Gastrocnemius medialis (tissue), 4 donors: ENCODE measurements at regions of chr20 and their contacts with region 1.

Region 1: DNA sequence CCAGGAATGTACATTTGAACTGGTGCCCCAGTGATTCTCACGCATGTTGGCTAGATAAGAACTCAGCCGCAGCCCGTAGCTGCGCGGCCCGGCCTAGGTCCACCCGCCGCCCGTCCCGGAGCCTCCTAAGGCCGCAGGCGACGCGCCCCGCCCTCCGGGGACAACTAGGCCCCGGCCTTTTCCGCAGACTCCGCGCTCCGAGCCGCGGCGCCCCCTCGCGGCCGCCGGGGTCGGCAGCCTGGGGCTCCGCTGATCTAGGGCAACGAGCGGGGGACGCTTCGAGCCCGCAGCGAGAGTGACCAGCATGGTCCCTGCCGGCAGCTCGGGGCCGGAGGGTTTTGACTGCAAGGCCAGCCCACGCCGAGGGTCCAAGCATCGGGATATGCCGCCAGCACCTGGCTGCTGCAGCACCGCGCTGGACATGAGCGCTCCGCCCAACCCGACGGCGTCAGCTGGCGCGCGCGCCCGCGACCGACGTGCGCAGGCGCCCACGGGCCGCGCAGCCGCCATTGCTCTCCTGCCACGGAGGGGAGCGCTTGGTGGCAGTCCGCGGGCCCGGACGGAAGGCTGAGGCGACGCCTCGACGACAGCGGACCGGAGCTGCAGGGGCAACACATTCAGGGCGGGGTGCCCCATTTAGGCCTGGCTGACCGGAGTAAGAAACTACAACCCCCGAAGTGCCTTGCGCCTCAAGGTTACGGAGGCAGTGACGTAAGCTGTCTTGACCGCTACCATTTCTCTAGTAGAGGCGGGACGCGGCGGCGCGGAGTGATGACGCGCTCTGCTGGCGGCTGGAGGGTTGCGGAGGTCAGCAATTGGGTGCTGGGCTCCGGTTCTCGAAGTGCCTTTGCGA is at the start of gene AP5S1:
- DNase-seq: peak; percentile 96 to 98
- ATAC-seq: peak; percentile 87 to 92
- H3K4me3 ChIP-seq: peak within 1 kb of the TSS; percentile 64 to 75 (median 66)
- H3K27ac ChIP-seq: peak within 1 kb of the TSS; percentile 89 to 98 (median 96)
- H3K4me1 ChIP-seq: peaks cover 19 to 23% of the 10 kb centered on the region in 2 donors
- H3K27me3 ChIP-seq: no peaks in the 10 kb centered on the region
- CTCF ChIP-seq: peak; percentile 92 to 100 (median 100)
- POLR2A ChIP-seq: peak; percentile 43 to 60
- total RNA-seq, gene AP5S1: 11.6 to 20.9 (median 17.3) TPM

Region 2: GRCh38 chr20:3679749-3680700 is 140.2 kb before region 1 on chr20:
- in situ Hi-C with region 1: no loop called
- intact Hi-C with region 1: loop called (anchors 1 kb)
- DNase-seq: no peak
- ATAC-seq: no peak
- H3K4me3 ChIP-seq: peak overlapping the region in 1 of 4 donors; percentile 57
- H3K27ac ChIP-seq: peak overlapping the region; percentile 63 to 70 (median 66)
- H3K4me1 ChIP-seq: peaks cover 0 to 13% of the 10 kb centered on the region in 2 donors
- H3K27me3 ChIP-seq: peaks cover 5 to 23% (median 9%) of the 10 kb centered on the region in 3 donors
- CTCF ChIP-seq: no peak
- POLR2A ChIP-seq: no peak

Region 3: GRCh38 chr20:3686867-3687321 is 133.4 kb before region 1 on chr20:
- in situ Hi-C with region 1: no loop called
- intact Hi-C with region 1: loop called (anchors 1 kb)
- DNase-seq: peak; percentile 80 to 90
- ATAC-seq: peak; percentile 99
- H3K4me3 ChIP-seq: peak overlapping the region in 1 of 4 donors; percentile 5
- H3K27ac ChIP-seq: peak overlapping the region; percentile 57 to 76 (median 72)
- H3K4me1 ChIP-seq: peaks cover 14 to 16% of the 10 kb centered on the region in 2 donors
- H3K27me3 ChIP-seq: peaks cover 3 to 10% (median 5%) of the 10 kb centered on the region in 3 donors
- CTCF ChIP-seq: peak in 1 of 5 experiments; percentile 5
- POLR2A ChIP-seq: no peak

Region 4: DNA sequence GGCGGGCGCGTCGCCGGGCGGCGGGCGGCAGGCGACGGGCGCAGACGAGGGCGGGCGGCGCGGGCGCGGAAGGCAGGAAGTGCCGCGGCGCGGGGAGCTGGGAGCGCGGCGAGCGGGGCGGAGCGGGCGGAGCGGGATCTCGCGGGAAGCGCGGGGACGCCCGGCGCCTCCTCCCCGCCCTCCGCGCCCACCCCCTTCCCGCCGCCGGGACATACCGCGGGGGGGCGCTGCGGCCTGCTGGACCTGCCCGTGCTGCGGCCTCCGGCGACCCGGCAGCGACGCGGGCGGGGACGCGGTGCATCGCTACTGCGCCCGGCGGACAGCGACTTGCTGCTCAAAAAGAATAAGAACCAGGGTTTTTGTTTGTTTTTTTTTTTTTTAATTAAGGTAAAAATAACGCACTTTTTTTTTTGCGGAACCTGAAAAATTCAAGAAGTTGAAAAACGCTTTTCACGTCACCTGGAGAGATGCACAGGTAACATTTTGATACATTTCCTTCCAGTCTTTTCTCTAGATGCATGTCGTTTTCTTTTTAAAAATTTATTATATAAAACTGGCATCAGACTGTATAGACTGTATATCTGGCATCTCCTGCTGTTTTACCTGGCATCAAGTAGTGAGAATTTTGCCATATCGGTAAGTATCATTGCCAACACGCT is 33.5 kb before region 1 on chr20 and contains the start of gene CENPB:
- in situ Hi-C with region 1: no loop called
- intact Hi-C with region 1: loop called (anchors 1 kb)
- DNase-seq: peak; percentile 76 to 82
- ATAC-seq: peak; percentile 91 to 92
- H3K4me3 ChIP-seq: peak within 1 kb of the TSS; percentile 65 to 68 (median 67)
- H3K27ac ChIP-seq: peak within 1 kb of the TSS; percentile 76 to 85 (median 82)
- H3K4me1 ChIP-seq: peaks cover 28 to 32% of the 10 kb centered on the region in 2 donors
- H3K27me3 ChIP-seq: no peaks in the 10 kb centered on the region
- CTCF ChIP-seq: peak; percentile 59 to 97 (median 66)
- POLR2A ChIP-seq: no peak
- total RNA-seq, gene CENPB: 67.5 to 186 (median 143) TPM

Region 5: DNA sequence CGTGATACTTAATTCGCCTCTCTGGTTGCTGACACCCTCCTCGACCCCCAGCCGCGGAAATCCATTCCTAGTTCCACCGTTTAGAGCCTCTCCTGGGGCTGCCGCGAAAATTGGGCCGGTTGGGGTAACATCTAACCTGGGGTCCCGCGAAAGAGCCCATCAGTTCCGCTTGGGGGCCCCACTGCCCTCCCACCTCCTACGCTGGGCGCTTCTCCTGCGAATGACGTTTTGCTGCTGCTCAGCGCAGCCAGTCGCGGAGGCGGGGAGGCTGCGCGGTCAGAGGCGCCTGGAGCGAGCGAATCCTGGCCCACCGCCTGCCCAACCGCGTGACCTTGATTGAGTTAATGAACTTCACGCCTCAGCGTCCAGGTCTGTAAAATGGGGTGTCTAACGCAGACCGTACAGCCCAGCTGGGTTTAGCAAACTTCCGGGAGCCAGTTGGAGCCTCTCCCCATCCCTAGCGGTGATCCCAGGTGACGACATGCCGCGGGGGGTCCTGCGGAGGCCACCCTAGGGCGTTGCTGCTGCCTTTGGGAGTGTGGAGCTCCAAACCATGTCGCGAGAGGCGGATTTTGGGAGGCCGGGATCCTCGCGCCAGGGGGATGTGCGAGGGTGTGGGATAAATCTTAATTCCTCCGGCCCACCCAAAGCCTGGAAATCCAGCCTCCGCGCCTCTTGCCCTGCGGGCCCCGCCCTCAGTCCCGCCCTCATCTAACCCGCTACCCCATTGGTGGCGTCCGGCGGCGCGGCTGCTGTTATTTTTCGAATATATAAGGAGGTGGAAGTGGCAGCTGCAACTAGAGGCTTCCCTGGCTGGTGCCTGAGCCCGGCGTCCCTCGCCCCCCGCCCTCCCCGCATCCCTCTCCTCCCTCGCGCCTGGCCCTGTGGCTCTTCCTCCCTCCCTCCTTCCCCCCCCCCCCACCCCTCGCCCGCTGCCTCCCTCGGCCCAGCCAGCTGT is 24.5 kb before region 1 on chr20 and contains the start of gene CDC25B:
- in situ Hi-C with region 1: no loop called
- intact Hi-C with region 1: loop called (anchors 1 kb)
- DNase-seq: peak; percentile 90
- ATAC-seq: peak; percentile 95 to 97
- H3K4me3 ChIP-seq: peak within 1 kb of the TSS; percentile 60 to 90 (median 74)
- H3K27ac ChIP-seq: peak within 1 kb of the TSS; percentile 79 to 94 (median 88)
- H3K4me1 ChIP-seq: peaks cover 0 to 5% of the 10 kb centered on the region in 2 donors
- H3K27me3 ChIP-seq: no peaks in the 10 kb centered on the region
- CTCF ChIP-seq: peak; percentile 58 to 83 (median 74)
- POLR2A ChIP-seq: peak; percentile 55
- total RNA-seq, gene CDC25B: 2.3 to 17.3 (median 10.1) TPM

Region 6: DNA sequence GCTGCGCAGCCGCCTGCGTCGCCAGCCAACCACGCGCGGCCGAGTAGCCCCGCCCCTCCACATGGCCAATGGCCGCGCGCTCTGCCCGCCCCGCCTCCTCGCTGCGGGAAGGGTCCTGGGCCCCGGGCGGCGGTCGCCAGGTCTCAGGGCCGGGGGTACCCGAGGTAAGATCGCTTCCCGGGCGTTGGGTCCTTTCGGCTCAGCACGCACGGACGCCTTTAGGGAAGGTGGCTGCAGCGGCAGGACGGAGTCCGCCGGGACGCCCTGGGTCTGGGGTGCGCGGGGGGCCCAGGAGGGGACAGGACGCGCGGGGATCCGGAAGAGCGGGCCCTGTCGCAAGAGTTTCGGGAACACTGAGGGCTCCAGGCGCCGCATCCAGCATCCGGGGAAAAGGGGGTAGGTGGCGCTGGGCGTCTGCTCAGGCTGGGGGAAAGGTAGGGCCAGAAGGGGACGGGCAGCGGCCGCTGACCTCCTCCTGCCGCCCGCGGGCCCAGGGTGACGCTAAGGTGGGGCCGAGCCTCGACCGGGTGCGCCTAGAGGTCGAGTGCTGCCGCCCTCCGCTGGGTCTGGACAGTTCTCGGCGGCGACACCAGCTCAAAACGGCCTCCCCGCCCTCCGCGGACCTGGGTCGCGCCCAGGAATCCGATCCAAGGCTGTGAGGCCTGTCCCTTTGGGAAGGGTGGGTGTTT is 26.6 kb after region 1 on chr20 and contains the start of gene MAVS:
- in situ Hi-C with region 1: no loop called
- intact Hi-C with region 1: loop called (anchors 1 kb)
- DNase-seq: peak; percentile 79 to 88
- ATAC-seq: peak; percentile 90 to 95
- H3K4me3 ChIP-seq: peak within 1 kb of the TSS; percentile 75 to 98 (median 84)
- H3K27ac ChIP-seq: peak within 1 kb of the TSS; percentile 95 to 98 (median 96)
- H3K4me1 ChIP-seq: peaks cover 9 to 13% of the 10 kb centered on the region in 2 donors
- H3K27me3 ChIP-seq: no peaks in the 10 kb centered on the region
- CTCF ChIP-seq: peak in 1 of 5 experiments; percentile 13
- POLR2A ChIP-seq: peak; percentile 84 to 85
- total RNA-seq, gene MAVS: 37.9 to 64.5 (median 44.4) TPM